Activated CD4-positive, alpha-beta T cell treated with anti-CD3 and anti-CD28 coated beads, Interleukin-2, amount 10 ng/mL, durations not matched to agents 24 days and 14 days (primary cell): ENCODE measurements at regions of chr1 and their contacts with region 1.

Region 1: GRCh38 chr1:234676103-234676594 is 66.2 kb upstream of the IRF2BP2 start:
- DNase-seq: peak; percentile 87
- H3K4me3 Mint-ChIP-seq: peak overlapping the region; percentile 77
- H3K27ac Mint-ChIP-seq: peak overlapping the region; percentile 40
- H3K4me1 Mint-ChIP-seq: peaks cover 11% of the 10 kb centered on the region
- H3K27me3 Mint-ChIP-seq: peaks cover 1% of the 10 kb centered on the region

Region 2: DNA sequence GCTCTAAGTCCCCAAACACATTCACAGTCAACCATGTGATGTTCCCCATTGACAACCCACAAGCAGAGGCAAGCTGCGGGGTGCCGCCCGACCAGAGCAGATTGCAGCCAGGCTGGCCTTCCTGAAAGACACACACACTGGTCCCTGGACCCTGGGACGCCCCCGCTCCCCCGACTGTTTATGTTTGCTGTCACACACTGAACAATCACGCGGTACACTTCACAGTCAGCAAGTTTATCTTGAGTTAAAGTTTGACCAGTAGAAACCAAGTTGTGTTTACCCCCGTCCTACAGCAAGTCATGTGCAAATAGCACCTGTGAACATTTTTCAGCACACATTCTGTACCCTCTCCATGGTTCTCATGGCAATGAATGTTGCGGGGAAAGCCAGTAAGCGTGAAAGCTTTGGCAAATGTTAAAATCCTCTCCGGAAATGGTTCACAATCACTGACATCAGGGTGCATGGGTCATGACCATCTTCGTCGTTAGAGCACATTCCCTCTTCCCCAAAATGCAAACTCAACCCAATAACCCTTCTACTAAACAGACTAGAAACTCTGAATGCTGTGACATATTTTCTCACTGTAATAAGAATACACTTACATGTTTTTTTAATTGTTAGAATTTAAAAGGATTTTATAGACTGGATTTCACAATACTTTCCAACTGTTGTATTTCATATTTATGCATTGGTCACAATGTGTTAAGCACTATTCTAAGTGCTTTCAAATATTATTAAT is 32.9 kb before region 1 on chr1:
- intact Hi-C with region 1: loop called (anchors 5 kb)
- DNase-seq: no peak
- H3K4me3 Mint-ChIP-seq: no peak overlapping the region
- H3K27ac Mint-ChIP-seq: no peak overlapping the region
- H3K4me1 Mint-ChIP-seq: peaks cover 5% of the 10 kb centered on the region
- H3K27me3 Mint-ChIP-seq: peaks cover 6% of the 10 kb centered on the region

Region 3: DNA sequence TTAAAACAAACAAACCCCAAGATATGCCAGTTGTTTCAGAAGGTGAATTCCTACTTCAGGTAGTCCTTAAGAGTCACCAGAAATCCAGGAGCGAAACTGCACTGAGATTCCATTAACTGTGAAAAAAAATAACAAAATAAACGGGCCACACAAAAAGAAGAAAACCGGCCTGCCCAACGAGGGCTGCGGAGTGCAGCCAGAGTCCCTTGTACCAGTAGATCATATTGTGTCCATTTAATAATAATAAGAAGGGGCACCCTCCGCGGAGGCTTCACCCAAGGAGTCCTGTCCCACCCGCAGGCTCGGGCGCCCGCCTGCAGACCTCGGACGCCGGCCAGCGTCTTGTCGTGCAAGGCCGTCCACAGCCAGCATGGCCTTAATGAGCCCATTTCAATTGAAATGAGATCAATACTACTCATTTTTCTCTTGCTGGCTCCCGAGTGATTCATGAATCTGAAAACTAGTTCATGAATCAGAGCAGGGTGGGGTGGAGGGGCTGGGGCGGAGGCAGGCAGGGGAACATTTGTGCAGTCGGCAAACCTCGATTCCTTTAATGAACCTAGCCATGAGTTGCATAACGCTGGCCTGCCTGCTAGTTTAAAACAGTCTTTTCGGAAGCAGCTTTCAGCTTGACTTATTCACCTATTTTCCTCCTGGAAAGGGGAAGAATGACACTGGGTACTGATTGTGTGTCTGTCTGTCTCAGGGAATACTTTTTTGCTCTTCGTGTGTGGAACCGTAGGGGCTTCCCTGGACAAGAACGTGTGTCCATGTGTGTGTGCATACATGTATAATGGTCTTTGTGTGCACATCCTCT is 47.0 kb after region 1 on chr1:
- intact Hi-C with region 1: loop called (anchors 2 kb)
- DNase-seq: peak; percentile 66
- H3K4me3 Mint-ChIP-seq: peak overlapping the region; percentile 76
- H3K27ac Mint-ChIP-seq: peak overlapping the region; percentile 96
- H3K4me1 Mint-ChIP-seq: peaks cover 82% of the 10 kb centered on the region
- H3K27me3 Mint-ChIP-seq: peaks cover 2% of the 10 kb centered on the region